IMR-90 (cell line): ENCODE measurements at regions of chr14 and their contacts with region 1.

Region 1: DNA sequence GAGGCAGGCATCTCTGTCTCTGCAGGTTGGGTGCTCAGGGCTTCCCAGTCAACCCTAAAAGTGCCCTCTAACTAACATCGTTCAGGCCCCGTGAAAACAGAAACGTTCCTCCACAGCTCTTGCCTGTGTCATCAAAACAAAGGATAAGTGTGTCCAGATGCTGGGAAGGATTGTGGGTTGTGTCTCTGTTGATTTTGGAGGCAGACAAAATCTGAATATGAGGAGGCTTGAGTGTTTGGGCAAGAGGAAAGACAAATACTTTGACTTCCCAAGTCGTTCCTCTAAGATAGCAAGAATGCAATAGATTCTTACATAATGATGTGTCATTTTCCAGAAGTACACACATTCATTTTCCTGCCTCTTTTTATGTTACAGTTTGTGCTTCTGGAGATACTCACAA is 52.9 kb downstream of the SERPINA3 start:
- DNase-seq: peak; percentile 80
- ATAC-seq: peak; percentile 86
- H3K4me3 ChIP-seq: no peak overlapping the region
- H3K27ac ChIP-seq: no peak overlapping the region
- H3K4me1 ChIP-seq: peaks cover 2% of the 10 kb centered on the region; the same call in 1 of the 2 replicates
- H3K27me3 ChIP-seq: no peaks in the 10 kb centered on the region
- CTCF ChIP-seq: no peak
- POLR2A ChIP-seq: no peak
- RAD21 ChIP-seq: no peak

Region 2: DNA sequence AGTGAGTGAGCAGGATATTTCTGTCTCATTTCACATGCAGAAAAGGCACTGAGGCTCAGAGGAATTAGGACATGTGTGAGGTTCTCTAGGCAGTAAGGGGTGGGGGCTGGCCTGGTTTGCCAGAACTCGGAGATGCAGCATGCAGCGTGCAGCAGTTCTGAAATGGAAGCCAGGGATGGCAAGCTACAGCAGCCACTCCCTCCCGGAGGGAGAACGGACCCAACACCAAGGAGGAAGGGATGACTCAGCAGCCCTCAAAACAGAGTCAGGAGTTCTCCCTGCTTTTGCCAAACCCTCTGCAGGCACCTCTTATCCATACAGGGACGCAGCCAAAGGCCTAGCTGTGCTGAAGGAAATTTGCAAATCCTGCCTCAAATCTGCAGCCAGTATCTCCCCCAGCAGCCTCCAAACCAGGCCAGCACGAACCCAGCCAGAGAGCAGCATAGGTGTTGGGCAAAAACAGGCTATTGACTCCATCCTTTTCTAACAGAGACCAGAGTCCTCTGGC is 63.2 kb before region 1 on chr14:
- CTCF ChIA-PET with region 1: no interaction called
- POLR2A ChIA-PET with region 1: no interaction called
- dilution Hi-C with region 1: no loop called
- in situ Hi-C with region 1: no loop called
- intact Hi-C with region 1: loop called (anchors 5 kb)
- DNase-seq: peak; percentile 89
- ATAC-seq: peak; percentile 69
- H3K4me3 ChIP-seq: no peak overlapping the region
- H3K27ac ChIP-seq: peak overlapping the region; percentile 96; the same call in 1 of the 2 replicates
- H3K4me1 ChIP-seq: peaks cover 20% of the 10 kb centered on the region
- H3K27me3 ChIP-seq: no peaks in the 10 kb centered on the region; the same call in 1 of the 2 replicates
- CTCF ChIP-seq: no peak
- POLR2A ChIP-seq: no peak
- RAD21 ChIP-seq: no peak

Region 3: DNA sequence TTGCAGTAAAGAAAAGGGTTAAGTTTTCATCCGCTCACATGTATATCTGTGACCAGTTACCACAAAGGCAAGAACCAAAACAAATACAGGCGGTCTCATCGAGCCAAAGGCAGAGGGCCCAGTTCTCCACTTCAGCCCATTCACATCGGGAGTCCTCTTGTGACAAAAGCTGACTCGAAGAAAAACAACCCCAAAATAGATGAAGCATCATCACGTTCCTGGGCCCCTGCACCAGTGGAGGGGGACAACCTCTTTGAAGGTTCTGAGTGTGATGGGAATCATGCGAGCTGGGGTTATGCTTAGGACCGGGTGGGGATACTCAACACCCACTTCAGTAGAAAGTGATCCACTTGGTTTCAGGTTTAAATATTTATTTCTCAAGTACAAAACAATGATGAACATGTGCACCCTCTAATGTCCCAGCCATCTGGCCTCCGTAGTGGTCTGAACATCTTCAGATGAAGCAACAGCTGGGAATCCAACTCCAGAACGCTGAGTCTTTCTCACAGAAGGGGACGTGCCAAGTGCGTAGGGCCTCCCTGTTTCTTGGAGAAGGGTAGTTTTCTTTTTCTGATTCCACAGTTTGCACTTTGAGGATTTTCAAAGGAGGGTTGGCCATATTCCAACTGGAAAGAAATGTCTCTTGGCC is 96.4 kb after region 1 on chr14:
- CTCF ChIA-PET with region 1: no interaction called
- POLR2A ChIA-PET with region 1: no interaction called
- dilution Hi-C with region 1: no loop called
- in situ Hi-C with region 1: no loop called
- intact Hi-C with region 1: no loop called
- DNase-seq: no peak
- ATAC-seq: no peak
- H3K4me3 ChIP-seq: no peak overlapping the region
- H3K27ac ChIP-seq: no peak overlapping the region
- H3K4me1 ChIP-seq: no peaks in the 10 kb centered on the region
- H3K27me3 ChIP-seq: peaks cover 12% of the 10 kb centered on the region
- CTCF ChIP-seq: no peak
- POLR2A ChIP-seq: no peak
- RAD21 ChIP-seq: no peak